Activated naive CD4-positive, alpha-beta T cell treated with anti-CD3 and anti-CD28 coated beads for 36 hours (primary cell): ENCODE measurements at regions of chrX and their contacts with region 1.

Region 1: GRCh38 chrX:136577552-136577951 is 45.5 kb downstream of the VGLL1 start:
- DNase-seq: peak; percentile 82
- H3K4me3 Mint-ChIP-seq: peak overlapping the region; percentile 4
- H3K27ac Mint-ChIP-seq: peak overlapping the region; percentile 23
- H3K4me1 Mint-ChIP-seq: peaks cover 37% of the 10 kb centered on the region
- H3K27me3 Mint-ChIP-seq: no peaks in the 10 kb centered on the region

Region 2: DNA sequence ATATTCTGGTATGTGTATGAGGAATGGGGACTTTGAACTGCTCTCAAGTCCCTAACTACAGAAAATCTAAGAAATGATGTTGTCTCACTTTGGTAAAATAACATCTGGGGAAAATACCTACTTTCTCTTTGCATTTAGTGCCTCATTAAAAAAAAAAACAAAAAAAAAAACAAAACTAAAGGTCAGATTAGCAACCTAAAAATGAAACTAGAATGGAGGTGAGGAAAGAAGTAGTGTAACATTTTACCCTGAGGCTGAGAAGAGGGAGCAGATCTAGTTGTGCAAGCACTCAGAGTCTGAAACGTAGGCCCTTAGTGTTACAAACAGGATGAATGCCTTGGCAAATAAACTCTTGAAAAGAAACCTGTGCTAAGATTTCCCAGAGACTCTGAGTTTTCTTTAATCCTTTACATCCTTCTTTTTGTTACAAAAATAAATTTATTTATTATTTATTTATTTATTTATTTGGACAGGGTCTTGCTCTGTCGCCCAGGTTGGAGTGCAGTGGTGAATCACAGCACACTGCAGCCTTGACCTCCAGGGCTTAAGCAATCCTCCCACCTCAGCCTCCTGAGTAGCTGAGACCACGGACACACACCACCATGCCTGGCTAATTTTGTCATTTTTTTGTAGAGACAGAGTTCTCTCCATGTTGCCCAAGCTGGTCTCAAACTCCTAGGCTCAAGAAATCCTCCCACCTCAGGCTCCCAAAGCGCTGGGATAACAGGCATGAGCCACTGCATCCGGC is 10.7 kb after region 1 on chrX:
- CTCF ChIA-PET with region 1: interaction called, 11 read pairs
- intact Hi-C with region 1: loop called (anchors 1 kb)
- DNase-seq: peak; percentile 37
- H3K4me3 Mint-ChIP-seq: no peak overlapping the region
- H3K27ac Mint-ChIP-seq: peak overlapping the region; percentile 86
- H3K4me1 Mint-ChIP-seq: peaks cover 63% of the 10 kb centered on the region
- H3K27me3 Mint-ChIP-seq: no peaks in the 10 kb centered on the region

Region 3: DNA sequence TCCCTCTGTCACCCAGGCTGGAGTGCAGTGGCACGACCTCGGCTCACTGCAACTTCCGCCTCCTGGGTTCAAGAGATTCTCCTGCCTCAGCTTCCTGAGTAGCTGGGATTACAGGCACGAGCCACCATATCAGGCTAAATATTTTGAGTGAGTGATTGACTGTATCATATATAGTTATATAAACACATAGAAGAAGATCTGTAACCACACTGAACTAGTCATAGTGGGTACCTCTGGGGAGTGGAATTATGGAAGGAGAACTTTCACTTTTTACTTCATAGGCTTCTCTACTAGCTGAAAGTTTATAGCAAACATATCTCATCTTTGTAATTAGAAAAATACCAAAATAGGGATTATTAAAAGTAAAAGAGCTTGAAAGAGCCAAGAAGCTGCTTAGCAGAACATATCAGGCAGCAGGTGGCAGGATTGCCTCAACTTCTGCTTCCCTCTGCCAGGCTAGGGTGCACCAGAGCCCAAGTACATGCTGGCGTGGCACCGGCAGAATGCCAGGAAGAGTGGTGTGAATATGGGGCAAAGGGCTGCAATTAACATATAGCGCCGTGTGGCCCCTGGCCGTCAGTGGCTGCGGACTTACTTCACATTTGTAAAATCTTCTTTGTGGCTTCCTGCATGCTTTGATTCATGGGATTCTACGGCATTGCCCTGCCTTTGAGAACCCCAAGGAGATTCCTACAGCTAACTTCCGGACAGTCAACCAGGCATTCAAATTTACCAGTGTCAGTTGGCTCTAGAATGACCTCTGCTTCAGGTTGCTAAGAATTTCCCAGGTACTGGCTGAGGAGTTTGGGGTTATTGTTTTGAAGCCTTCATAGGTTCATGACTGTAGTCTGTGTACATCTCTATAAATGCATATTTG is 31.0 kb after region 1 on chrX:
- CTCF ChIA-PET with region 1: interaction called, 8 read pairs
- intact Hi-C with region 1: loop called (anchors 1 kb)
- DNase-seq: peak; percentile 80
- H3K4me3 Mint-ChIP-seq: peak overlapping the region; percentile 46
- H3K27ac Mint-ChIP-seq: peak overlapping the region; percentile 79
- H3K4me1 Mint-ChIP-seq: peaks cover 54% of the 10 kb centered on the region
- H3K27me3 Mint-ChIP-seq: no peaks in the 10 kb centered on the region